Naive thymus-derived CD4-positive, alpha-beta T cell (primary cell): ENCODE measurements at regions of chr2 and their contacts with region 1.

Region 1: DNA sequence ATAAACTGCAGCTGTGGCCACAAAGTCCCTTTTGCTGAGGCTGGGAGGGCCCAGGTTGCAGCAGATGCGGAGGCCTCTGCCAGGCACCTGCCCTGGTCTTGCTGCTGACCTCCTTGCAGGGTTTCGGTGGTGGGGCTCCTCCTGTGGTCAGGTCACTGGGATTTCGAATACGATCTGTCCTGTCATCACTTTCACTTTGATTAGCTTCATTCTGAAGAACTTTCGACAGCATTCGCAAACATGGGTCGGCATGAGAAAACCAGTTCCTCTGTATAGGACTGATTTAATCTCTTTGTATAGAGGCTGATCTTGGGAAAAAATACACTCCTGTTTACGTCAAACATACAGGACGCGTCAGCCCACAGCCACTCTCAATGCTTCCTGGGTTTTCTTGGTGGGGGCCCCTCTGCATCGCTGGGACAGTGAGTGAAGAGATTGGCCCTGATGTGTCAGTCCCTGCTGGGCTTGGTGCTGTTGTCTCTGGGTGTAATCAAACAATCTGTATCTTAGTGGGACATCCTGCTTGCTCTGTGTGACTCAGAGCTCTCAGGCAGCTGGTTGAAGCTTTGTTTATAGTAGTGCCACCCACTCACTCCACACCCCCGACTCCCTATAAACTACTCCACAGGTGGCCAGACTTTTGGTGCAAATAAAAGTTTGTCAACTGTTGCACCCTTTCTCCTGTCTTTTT is 209.4 kb upstream of the CXCR4 start:
- DNase-seq: peak; percentile 28 to 90 (median 83)
- ATAC-seq: peak; percentile 93
- H3K4me3 ChIP-seq: peak overlapping the region; percentile 38
- H3K4me3 Mint-ChIP-seq: peak overlapping the region; percentile 74 to 89 (median 82)
- H3K27ac ChIP-seq: peak overlapping the region; percentile 74
- H3K27ac Mint-ChIP-seq: peak overlapping the region; percentile 93 to 99 (median 97)
- H3K4me1 ChIP-seq: peaks cover 17 to 44% of the 10 kb centered on the region in 2 donors
- H3K4me1 Mint-ChIP-seq: peaks cover 43 to 73% (median 62%) of the 10 kb centered on the region in 7 donors
- H3K27me3 ChIP-seq: no peaks in the 10 kb centered on the region
- H3K27me3 Mint-ChIP-seq: no peaks in the 10 kb centered on the region

Region 2: DNA sequence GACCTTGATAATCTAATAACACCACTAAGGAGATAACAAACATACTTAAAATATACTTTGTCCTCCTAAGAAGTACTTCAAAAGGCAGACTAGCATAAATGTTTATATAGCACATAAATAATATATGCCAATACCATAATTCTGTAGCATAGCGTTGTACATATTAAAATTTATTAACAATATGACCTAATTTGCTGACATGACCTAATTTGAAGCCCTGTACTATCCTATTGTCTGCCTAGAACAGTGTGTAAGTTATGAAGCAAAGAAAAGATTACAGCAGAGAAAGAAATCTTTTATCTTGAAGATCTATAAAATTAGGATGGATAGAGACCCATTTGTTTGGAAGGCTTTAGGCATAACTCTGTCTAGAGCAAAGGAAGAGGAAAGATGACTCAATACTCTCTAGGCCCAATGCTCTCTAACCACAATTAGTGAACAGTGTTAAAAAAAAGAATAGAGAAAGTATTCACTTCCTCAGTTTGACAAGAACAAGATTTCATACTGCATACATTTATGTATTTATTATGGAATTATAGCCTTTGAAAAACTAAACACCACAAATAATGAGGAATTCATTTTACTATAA is 1027.6 kb before region 1 on chr2:
- CTCF ChIA-PET with region 1: no interaction called
- POLR2A ChIA-PET with region 1: no interaction called
- intact Hi-C with region 1: no loop called
- DNase-seq: no peak
- ATAC-seq: no peak
- H3K4me3 ChIP-seq: no peak overlapping the region
- H3K4me3 Mint-ChIP-seq: no peak overlapping the region
- H3K27ac ChIP-seq: no peak overlapping the region
- H3K27ac Mint-ChIP-seq: no peak overlapping the region
- H3K4me1 ChIP-seq: no peaks in the 10 kb centered on the region
- H3K4me1 Mint-ChIP-seq: peaks cover 0 to 8% (median 0%) of the 10 kb centered on the region in 7 donors
- H3K27me3 ChIP-seq: no peaks in the 10 kb centered on the region
- H3K27me3 Mint-ChIP-seq: no peaks in the 10 kb centered on the region

Region 3: GRCh38 chr2:135327146-135327545 is 1000.2 kb before region 1 on chr2:
- CTCF ChIA-PET with region 1: no interaction called
- POLR2A ChIA-PET with region 1: no interaction called
- intact Hi-C with region 1: no loop called
- DNase-seq: no peak
- ATAC-seq: no peak
- H3K4me3 ChIP-seq: no peak overlapping the region
- H3K4me3 Mint-ChIP-seq: no peak overlapping the region
- H3K27ac ChIP-seq: no peak overlapping the region
- H3K27ac Mint-ChIP-seq: no peak overlapping the region
- H3K4me1 ChIP-seq: no peaks in the 10 kb centered on the region
- H3K4me1 Mint-ChIP-seq: no peaks in the 10 kb centered on the region
- H3K27me3 ChIP-seq: no peaks in the 10 kb centered on the region
- H3K27me3 Mint-ChIP-seq: no peaks in the 10 kb centered on the region

Region 4: DNA sequence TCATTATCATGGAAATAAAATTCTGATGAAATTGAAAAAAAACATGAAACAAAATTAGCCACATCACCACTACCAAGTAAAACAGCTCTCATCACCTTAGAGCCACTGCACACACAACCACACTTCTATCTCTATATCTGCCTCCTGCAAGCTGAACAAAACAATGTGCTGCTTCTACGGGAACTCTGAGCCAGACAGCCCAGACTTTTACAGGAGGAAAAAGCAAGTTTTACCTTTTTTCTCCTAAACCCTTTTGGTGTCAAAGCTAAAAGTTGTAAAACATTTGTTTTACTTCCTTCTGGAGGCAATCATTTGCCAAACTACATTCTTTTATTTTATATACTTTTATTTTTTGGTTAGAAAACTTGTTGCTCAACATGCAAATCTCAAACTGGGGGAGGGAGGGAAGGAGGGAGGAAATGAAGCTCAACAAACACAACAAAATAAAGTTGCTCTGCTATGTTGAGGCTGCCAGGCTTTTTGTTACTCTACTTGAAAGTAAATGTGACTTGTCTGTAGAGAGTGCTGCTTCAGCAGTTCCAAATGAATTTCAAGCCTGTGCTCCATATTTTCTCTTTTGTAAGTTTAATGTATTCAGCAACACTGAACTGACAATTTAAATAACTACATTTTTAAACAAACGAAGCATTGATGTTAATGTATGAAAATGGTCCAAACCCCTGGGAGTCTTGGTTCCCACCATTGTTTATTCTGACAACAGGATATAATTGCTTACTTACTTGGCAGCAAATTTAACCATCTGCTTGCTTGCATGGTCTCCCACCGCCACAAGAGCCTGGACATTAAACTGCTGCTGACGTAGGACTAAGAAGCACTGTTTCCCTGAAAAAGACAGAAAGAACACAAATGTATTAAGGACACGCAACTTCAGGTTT is 366.4 kb before region 1 on chr2:
- CTCF ChIA-PET with region 1: no interaction called
- POLR2A ChIA-PET with region 1: no interaction called
- intact Hi-C with region 1: loop called in 1 of 2 experiments (anchors 5 kb)
- DNase-seq: peak in 6 of 9 donors; percentile 3 to 44 (median 26)
- ATAC-seq: peak; percentile 76
- H3K4me3 ChIP-seq: no peak overlapping the region
- H3K4me3 Mint-ChIP-seq: peak overlapping the region in 9 of 10 donors; percentile 3 to 79 (median 37)
- H3K27ac ChIP-seq: peak overlapping the region; percentile 40
- H3K27ac Mint-ChIP-seq: peak overlapping the region; percentile 51 to 93 (median 83)
- H3K4me1 ChIP-seq: peaks cover 18 to 26% of the 10 kb centered on the region in 2 donors
- H3K4me1 Mint-ChIP-seq: peaks cover 37 to 67% (median 60%) of the 10 kb centered on the region in 7 donors
- H3K27me3 ChIP-seq: no peaks in the 10 kb centered on the region
- H3K27me3 Mint-ChIP-seq: no peaks in the 10 kb centered on the region

Region 5: DNA sequence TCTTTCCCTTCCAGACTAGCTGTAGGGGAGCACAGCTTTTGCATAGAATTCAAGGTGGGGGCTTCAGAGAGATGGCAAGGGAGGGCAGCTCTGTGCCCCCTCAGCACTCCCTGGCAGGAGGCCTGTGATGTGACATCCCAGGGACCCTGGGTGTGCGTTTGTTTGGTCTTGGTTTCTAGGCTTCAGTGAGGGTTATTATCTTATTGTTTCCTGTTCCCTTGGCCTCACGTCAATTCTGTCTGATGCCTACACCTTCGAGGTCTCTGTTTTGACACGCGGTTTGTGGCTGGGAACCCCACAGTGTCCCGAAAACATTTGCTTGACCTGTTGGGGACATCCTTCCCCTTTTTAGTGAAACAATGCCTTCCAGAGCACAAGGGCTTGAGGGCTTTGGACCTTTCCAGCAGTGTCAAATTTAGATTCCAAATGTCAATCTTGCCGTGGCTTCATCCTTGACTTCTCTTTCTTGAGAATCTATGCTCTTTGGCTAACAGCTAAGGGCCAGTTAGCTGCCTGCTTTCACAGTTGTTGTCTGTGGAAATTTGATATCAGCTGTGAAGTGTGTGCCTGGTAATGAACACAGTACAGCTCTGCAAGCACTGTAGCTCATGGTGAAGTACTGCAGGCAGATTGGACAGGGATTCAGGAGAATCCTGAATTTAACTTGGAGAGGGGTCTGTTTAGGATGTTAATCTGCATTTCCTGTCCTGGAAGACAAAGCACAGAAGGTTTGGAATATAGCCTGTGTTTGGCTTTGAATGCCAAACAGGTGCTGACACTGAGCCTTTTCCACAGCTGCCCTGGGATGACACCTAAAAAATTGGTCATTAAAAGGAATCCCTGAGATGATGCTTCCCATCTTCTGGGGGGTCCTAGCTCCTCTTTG is 101.1 kb before region 1 on chr2:
- CTCF ChIA-PET with region 1: no interaction called
- POLR2A ChIA-PET with region 1: no interaction called
- intact Hi-C with region 1: no loop called
- DNase-seq: peak in 6 of 9 donors; percentile 27 to 51 (median 45)
- ATAC-seq: peak; percentile 90
- H3K4me3 ChIP-seq: no peak overlapping the region
- H3K4me3 Mint-ChIP-seq: peak overlapping the region in 4 of 10 donors; percentile 1 to 19 (median 11)
- H3K27ac ChIP-seq: no peak overlapping the region
- H3K27ac Mint-ChIP-seq: peak overlapping the region in 7 of 9 donors; percentile 54 to 94 (median 82)
- H3K4me1 ChIP-seq: peaks cover 9 to 25% of the 10 kb centered on the region in 2 donors
- H3K4me1 Mint-ChIP-seq: peaks cover 9 to 16% (median 10%) of the 10 kb centered on the region in 7 donors
- H3K27me3 ChIP-seq: no peaks in the 10 kb centered on the region
- H3K27me3 Mint-ChIP-seq: peaks cover 0 to 24% (median 0%) of the 10 kb centered on the region in 5 donors

Region 6: DNA sequence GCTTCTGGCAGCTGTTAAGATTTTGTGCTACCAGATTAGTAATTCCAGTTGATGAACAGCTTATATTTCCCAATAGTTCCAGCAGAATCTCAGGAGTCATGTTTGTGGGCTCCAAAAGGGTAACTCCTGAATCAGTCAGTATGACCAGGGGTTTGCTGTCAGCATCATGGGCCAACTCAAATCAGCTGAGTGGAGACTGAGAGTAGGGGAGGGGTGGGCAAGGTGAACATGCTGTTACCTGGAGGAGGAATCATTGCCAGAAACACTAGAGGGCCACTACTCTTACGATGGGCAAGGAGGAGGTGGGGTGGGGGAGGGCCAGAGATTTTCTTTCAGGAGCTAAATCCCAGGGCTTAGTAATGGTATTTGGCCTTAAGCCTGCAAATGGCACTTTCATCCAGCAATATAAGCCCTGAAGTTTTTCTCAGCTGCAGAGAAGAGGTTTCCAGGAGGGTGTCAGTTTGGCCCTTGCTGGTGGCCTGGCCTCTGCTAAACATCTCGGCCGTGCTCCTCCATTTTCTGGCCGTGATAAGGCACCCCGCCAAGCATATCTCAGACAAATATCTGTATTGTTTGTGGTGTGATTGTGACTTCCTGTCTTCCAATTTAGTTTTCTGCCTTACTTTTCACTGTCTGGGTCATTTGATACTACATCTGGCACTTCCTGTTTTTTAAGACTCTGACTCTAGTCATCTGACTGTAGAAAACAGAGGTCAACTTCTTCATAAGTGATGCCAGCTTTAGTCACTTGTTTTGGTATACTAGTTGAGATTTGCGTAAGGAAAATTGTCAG is 88.8 kb before region 1 on chr2:
- CTCF ChIA-PET with region 1: no interaction called
- POLR2A ChIA-PET with region 1: interaction called, 6 read pairs
- intact Hi-C with region 1: loop called in 1 of 2 experiments (anchors 1 kb)
- DNase-seq: peak in 8 of 9 donors; percentile 33 to 75 (median 60)
- ATAC-seq: peak; percentile 84
- H3K4me3 ChIP-seq: no peak overlapping the region
- H3K4me3 Mint-ChIP-seq: peak overlapping the region; percentile 26 to 64 (median 48)
- H3K27ac ChIP-seq: peak overlapping the region; percentile 25
- H3K27ac Mint-ChIP-seq: peak overlapping the region; percentile 84 to 95 (median 90)
- H3K4me1 ChIP-seq: peaks cover 31 to 36% of the 10 kb centered on the region in 2 donors
- H3K4me1 Mint-ChIP-seq: peaks cover 32 to 60% (median 54%) of the 10 kb centered on the region in 7 donors
- H3K27me3 ChIP-seq: no peaks in the 10 kb centered on the region
- H3K27me3 Mint-ChIP-seq: no peaks in the 10 kb centered on the region

Region 7: GRCh38 chr2:136297994-136298393 is 29.3 kb before region 1 on chr2:
- CTCF ChIA-PET with region 1: no interaction called
- POLR2A ChIA-PET with region 1: no interaction called
- intact Hi-C with region 1: loop called in 1 of 2 experiments (anchors 2 kb)
- DNase-seq: no peak
- ATAC-seq: no peak
- H3K4me3 ChIP-seq: no peak overlapping the region
- H3K4me3 Mint-ChIP-seq: no peak overlapping the region
- H3K27ac ChIP-seq: no peak overlapping the region
- H3K27ac Mint-ChIP-seq: no peak overlapping the region
- H3K4me1 ChIP-seq: no peaks in the 10 kb centered on the region
- H3K4me1 Mint-ChIP-seq: peaks cover 4 to 17% (median 13%) of the 10 kb centered on the region in 7 donors
- H3K27me3 ChIP-seq: no peaks in the 10 kb centered on the region
- H3K27me3 Mint-ChIP-seq: peaks cover 0 to 2% (median 0%) of the 10 kb centered on the region in 5 donors

Region 8: DNA sequence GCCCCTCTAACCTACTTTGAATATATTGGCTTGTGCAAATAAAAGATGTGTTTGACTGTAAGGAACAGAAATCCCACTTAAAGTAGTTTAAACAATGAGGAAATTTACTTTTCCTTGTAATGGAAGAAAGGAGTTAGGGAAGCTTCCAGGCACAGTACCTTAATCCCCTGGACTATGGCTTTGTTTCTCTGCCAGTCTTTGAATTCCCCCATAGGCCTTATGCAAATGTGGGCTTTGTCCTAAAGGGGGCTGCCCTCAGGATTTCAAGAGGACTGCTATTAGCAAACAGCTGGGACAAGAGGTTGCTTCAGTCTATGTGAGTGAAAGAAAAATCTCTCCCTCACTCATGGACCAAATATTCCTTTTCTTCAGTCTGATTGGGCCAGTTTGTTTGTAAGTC is 182.9 kb after region 1 on chr2:
- CTCF ChIA-PET with region 1: no interaction called
- POLR2A ChIA-PET with region 1: no interaction called
- intact Hi-C with region 1: no loop called
- DNase-seq: no peak
- ATAC-seq: no peak
- H3K4me3 ChIP-seq: no peak overlapping the region
- H3K4me3 Mint-ChIP-seq: no peak overlapping the region
- H3K27ac ChIP-seq: no peak overlapping the region
- H3K27ac Mint-ChIP-seq: no peak overlapping the region
- H3K4me1 ChIP-seq: no peaks in the 10 kb centered on the region
- H3K4me1 Mint-ChIP-seq: no peaks in the 10 kb centered on the region
- H3K27me3 ChIP-seq: no peaks in the 10 kb centered on the region
- H3K27me3 Mint-ChIP-seq: peaks cover 4 to 23% (median 18%) of the 10 kb centered on the region in 5 donors